Activated CD4-positive, alpha-beta memory T cell treated with anti-CD3 and anti-CD28 coated beads, Interleukin-2, amount 10 ng/mL, durations not matched to agents 7 days and 5 days (primary cell): ENCODE measurements at regions of chr7 and their contacts with region 1.

Region 1: GRCh38 chr7:44565097-44565794 is 8.5 kb downstream of the DDX56 start:
- DNase-seq: peak; percentile 73
- H3K4me3 Mint-ChIP-seq: no peak overlapping the region
- H3K27ac Mint-ChIP-seq: no peak overlapping the region
- H3K4me1 Mint-ChIP-seq: peaks cover 2% of the 10 kb centered on the region
- H3K27me3 Mint-ChIP-seq: no peaks in the 10 kb centered on the region

Region 2: DNA sequence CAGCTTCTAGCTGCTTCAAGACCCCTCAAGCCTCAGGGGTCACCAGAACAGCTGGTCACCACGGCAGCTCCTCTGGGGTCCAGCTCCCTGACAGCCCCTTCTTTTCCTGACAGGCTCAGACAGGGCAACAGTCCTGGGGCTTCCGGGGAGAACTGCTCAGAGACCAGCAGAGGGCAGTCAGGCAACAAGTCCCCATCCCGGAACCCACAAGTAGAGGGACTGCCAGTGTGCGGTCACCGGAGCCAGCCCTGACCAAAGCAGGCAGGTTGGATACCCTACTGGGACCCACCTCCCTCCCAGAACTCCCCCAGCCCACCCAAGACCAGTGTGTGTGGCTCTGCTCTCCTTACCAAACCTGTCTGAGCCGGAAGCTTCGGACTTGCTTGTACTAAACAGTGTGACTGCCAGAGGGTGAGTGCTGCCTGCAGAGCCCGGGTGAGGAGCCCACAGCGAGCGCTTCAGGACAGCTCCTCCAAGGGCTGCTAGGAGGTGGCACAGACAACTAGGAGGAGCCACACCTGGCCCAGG is 324.2 kb before region 1 on chr7:
- CTCF ChIA-PET with region 1: interaction called, 29 read pairs
- POLR2A ChIA-PET with region 1: no interaction called
- DNase-seq: peak; percentile 70
- H3K4me3 Mint-ChIP-seq: no peak overlapping the region
- H3K27ac Mint-ChIP-seq: peak overlapping the region; percentile 31
- H3K4me1 Mint-ChIP-seq: no peaks in the 10 kb centered on the region
- H3K27me3 Mint-ChIP-seq: no peaks in the 10 kb centered on the region

Region 3: DNA sequence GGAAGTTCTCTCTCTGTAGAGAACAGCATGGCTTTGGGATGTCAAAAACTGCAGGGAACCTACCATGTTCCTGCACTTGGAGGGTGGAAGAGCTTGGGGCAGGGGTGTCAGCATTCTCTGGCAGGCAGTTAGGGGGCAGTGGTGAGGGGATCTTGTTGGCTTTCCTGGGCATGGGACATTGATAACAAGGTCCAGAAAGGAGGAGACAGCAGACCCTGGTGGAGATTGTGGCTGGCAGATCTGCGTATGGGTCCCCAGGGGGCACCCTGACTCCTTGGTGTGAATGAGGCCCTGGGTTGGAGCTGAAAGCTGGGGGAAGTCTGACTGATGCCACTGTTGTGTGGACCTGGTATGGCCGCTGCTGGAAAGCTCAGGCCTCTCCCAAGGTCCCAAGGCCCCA is 216.9 kb before region 1 on chr7:
- CTCF ChIA-PET with region 1: interaction called, 14 read pairs
- POLR2A ChIA-PET with region 1: interaction called, 3 read pairs
- DNase-seq: no peak
- H3K4me3 Mint-ChIP-seq: no peak overlapping the region
- H3K27ac Mint-ChIP-seq: no peak overlapping the region
- H3K4me1 Mint-ChIP-seq: no peaks in the 10 kb centered on the region
- H3K27me3 Mint-ChIP-seq: peaks cover 39% of the 10 kb centered on the region

Region 4: GRCh38 chr7:44547536-44548231 is 17.6 kb before region 1 on chr7:
- CTCF ChIA-PET with region 1: interaction called, 12 read pairs
- POLR2A ChIA-PET with region 1: no interaction called
- DNase-seq: no peak
- H3K4me3 Mint-ChIP-seq: no peak overlapping the region
- H3K27ac Mint-ChIP-seq: no peak overlapping the region
- H3K4me1 Mint-ChIP-seq: peaks cover 12% of the 10 kb centered on the region
- H3K27me3 Mint-ChIP-seq: peaks cover 24% of the 10 kb centered on the region